H1 (cell line): ENCODE measurements at regions of chr11 and their contacts with region 1.

Region 1: DNA sequence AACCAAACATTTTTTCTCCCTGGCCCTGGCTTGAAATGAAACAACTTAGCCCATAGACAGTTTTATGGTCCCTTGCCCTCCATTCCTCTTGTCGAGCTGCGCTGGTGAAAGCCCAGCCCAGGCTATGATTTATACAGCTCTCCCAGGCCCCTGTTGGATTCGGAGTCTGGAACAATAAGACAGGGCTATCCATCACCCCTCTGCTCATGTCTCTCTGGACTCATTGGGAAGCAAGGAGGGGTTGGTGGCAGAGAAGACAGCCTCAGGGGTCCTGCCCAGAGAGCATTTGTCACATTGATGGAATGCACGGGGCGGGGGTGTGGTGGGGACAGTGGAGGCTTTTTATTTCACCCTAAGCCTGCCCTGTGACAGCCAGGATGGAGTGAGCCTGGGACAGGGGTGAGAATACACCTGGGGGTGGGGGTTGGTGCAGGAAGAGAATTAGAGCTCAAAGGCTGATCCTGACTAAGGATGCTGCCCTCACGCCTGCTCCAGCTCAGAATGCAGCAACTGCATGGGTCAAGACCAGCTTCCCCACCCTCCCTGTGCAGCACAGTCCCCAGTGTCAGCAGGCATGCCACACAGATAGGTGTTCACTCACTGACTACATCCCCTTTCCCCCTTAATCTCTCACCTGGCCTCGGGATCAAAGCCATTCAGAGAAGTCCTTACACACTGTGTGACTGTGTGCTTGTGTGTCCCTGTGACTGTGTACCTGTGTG is 10.0 kb upstream of the PKNOX2 start:
- DNase-seq: no peak
- H3K4me3 ChIP-seq: no peak overlapping the region
- H3K27ac ChIP-seq: no peak overlapping the region
- H3K4me1 ChIP-seq: no peaks in the 10 kb centered on the region
- H3K27me3 ChIP-seq: no peaks in the 10 kb centered on the region; a peak in 1 of 7 replicates
- CTCF ChIP-seq: no peak
- EP300 ChIP-seq: no peak
- POLR2A ChIP-seq: no peak
- RAD21 ChIP-seq: no peak

Region 2: GRCh38 chr11:125170510-125171031 is 16.0 kb after region 1 on chr11:
- CTCF ChIA-PET with region 1: interaction called, 10 read pairs
- POLR2A ChIA-PET with region 1: interaction called, 4 read pairs
- DNase-seq: no peak
- H3K4me3 ChIP-seq: peak overlapping the region in 1 of 4 experiments; percentile 7; a peak in 1 of 8 replicates
- H3K27ac ChIP-seq: no peak overlapping the region
- H3K4me1 ChIP-seq: peaks cover 19 to 50% (median 32%) of the 10 kb centered on the region in 4 experiments
- H3K27me3 ChIP-seq: peaks cover 14 to 43% (median 38%) of the 10 kb centered on the region in 4 experiments
- CTCF ChIP-seq: no peak
- EP300 ChIP-seq: no peak
- POLR2A ChIP-seq: no peak
- RAD21 ChIP-seq: no peak